ENCODE measurements at regions of chr10 and their contacts with region 1.

Region 1: DNA sequence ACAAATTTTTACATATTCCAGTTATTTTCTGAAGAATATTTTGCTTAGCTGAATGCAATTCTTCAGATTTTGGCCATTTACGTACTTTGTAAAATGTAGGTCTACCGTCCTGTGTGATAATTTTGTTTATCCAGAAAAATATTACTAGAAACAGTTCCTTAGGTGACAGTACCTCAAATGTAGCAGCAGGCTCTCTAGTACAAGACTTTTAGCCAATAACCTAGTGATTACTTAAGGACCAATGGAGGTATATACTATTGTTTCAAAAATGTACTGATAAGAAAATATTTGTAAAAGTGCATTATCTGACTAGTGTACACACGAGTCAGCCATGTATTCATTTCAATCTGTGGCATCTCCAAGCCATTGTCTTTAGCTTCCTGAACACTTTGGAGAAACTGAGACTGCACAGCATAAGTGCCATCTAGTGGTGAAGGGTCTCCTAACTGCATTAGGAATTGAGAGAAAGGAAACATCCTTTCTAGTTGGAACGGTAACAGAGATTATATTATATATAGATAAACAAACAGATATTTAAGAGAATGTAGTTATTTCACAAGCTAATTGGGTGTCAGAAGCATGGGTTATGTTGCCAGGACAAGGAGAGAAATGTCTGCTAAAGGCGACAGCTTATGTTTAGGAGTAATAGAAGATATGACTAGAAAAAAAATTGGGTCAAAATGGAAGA is 23.7 kb downstream of the RTKN2 start:
- DNase-seq: peak in 4 of 5 donors; percentile 7 to 62 (median 50)
- H3K4me3 ChIP-seq: no peak overlapping the region
- H3K4me3 Mint-ChIP-seq: peak overlapping the region in 1 of 7 donors; percentile 10
- H3K27ac ChIP-seq: no peak overlapping the region
- H3K27ac Mint-ChIP-seq: peak overlapping the region in 2 of 8 donors; percentile 3 to 51
- H3K4me1 ChIP-seq: peaks cover 16% of the 10 kb centered on the region
- H3K4me1 Mint-ChIP-seq: peaks cover 23 to 35% (median 31%) of the 10 kb centered on the region in 3 donors
- H3K27me3 ChIP-seq: no peaks in the 10 kb centered on the region
- H3K27me3 Mint-ChIP-seq: peaks cover 0 to 3% of the 10 kb centered on the region in 2 donors

Region 2: DNA sequence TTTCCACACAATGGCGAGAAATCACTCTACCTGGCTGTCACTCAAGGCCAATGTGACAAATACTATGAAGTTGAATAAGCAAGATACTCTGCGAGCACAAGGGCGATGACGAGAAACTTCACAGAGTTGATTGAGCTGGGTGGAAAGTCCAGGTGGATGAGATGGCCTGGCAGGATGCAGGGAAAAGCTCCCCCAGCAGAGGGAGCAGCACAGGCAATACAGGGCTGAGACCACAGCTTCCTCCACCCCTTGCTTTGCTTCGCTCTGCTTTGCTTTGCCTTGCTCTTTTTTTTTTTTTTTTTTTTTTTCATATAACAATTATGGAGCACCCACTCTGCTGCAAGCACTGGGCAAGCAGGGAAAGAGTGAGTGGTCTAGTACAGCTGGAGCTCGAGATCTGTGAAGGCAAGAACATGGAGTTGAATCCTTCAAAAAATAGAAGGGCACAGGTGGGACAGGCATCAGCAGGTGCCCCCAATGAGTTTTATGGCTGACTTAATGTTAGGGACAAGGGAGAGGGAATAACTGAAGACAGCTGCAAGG is 493.9 kb before region 1 on chr10:
- CTCF ChIA-PET with region 1: interaction called, 23 read pairs
- POLR2A ChIA-PET with region 1: no interaction called
- DNase-seq: peak; percentile 29 to 78 (median 50)
- H3K4me3 ChIP-seq: no peak overlapping the region
- H3K4me3 Mint-ChIP-seq: peak overlapping the region in 3 of 7 donors; percentile 6 to 46 (median 34)
- H3K27ac ChIP-seq: no peak overlapping the region
- H3K27ac Mint-ChIP-seq: peak overlapping the region in 1 of 8 donors; percentile 92
- H3K4me1 ChIP-seq: peaks cover 19% of the 10 kb centered on the region
- H3K4me1 Mint-ChIP-seq: peaks cover 24 to 29% (median 28%) of the 10 kb centered on the region in 3 donors
- H3K27me3 ChIP-seq: no peaks in the 10 kb centered on the region
- H3K27me3 Mint-ChIP-seq: no peaks in the 10 kb centered on the region

Region 3: GRCh38 chr10:61896854-61897661 is 347.9 kb before region 1 on chr10:
- CTCF ChIA-PET with region 1: interaction called, 16 read pairs
- POLR2A ChIA-PET with region 1: interaction called, 7 read pairs
- DNase-seq: peak; percentile 9 to 70 (median 65)
- H3K4me3 ChIP-seq: peak overlapping the region; percentile 26
- H3K4me3 Mint-ChIP-seq: peak overlapping the region; percentile 49 to 85 (median 78)
- H3K27ac ChIP-seq: no peak overlapping the region
- H3K27ac Mint-ChIP-seq: peak overlapping the region; percentile 3 to 98 (median 82)
- H3K4me1 ChIP-seq: peaks cover 31% of the 10 kb centered on the region
- H3K4me1 Mint-ChIP-seq: peaks cover 30 to 37% (median 34%) of the 10 kb centered on the region in 3 donors
- H3K27me3 ChIP-seq: no peaks in the 10 kb centered on the region
- H3K27me3 Mint-ChIP-seq: no peaks in the 10 kb centered on the region

Region 4: DNA sequence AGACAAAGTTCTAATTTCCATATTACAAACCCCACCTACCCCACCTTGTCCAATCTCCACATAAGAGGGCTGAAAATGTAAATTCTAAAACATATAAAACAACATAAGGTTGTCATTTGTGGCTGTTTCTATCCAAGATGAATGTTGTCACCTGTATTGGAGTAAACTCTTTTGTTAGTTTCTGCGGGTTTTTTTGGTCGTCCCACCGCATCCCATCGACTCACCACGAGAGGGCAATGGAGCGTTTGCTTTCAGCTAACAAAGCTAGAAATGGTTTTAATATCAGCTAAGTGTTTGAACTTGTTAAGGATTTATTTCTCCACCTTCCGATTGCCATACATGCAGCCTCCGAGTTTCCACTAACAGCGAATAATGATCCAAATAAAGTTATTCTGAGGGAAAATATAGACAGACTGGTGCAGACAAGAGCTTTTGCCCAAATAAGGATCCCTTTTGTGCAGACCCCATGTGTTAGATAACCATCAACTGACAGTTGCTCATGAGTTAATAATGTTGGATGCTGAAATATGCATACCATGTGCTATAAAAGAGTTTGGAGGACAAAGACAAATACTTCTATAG is 206.2 kb before region 1 on chr10:
- CTCF ChIA-PET with region 1: interaction called, 69 read pairs
- POLR2A ChIA-PET with region 1: interaction called, 5 read pairs
- DNase-seq: peak; percentile 50 to 81 (median 61)
- H3K4me3 ChIP-seq: peak overlapping the region; percentile 10
- H3K4me3 Mint-ChIP-seq: peak overlapping the region in 6 of 7 donors; percentile 9 to 67 (median 42)
- H3K27ac ChIP-seq: no peak overlapping the region
- H3K27ac Mint-ChIP-seq: peak overlapping the region in 6 of 8 donors; percentile 1 to 78 (median 42)
- H3K4me1 ChIP-seq: peaks cover 49% of the 10 kb centered on the region
- H3K4me1 Mint-ChIP-seq: peaks cover 49 to 80% (median 70%) of the 10 kb centered on the region in 3 donors
- H3K27me3 ChIP-seq: no peaks in the 10 kb centered on the region
- H3K27me3 Mint-ChIP-seq: no peaks in the 10 kb centered on the region

Region 5: GRCh38 chr10:62050893-62051433 is 194.0 kb before region 1 on chr10:
- CTCF ChIA-PET with region 1: interaction called, 10 read pairs
- POLR2A ChIA-PET with region 1: no interaction called
- DNase-seq: peak; percentile 23 to 83 (median 52)
- H3K4me3 ChIP-seq: peak overlapping the region; percentile 47
- H3K4me3 Mint-ChIP-seq: peak overlapping the region; percentile 78 to 93 (median 88)
- H3K27ac ChIP-seq: peak overlapping the region; percentile 60
- H3K27ac Mint-ChIP-seq: peak overlapping the region; percentile 79 to 99 (median 94)
- H3K4me1 ChIP-seq: peaks cover 88% of the 10 kb centered on the region
- H3K4me1 Mint-ChIP-seq: peaks cover 96 to 99% (median 98%) of the 10 kb centered on the region in 3 donors
- H3K27me3 ChIP-seq: no peaks in the 10 kb centered on the region
- H3K27me3 Mint-ChIP-seq: no peaks in the 10 kb centered on the region

Region 6: GRCh38 chr10:62166331-62167131 is 78.4 kb before region 1 on chr10:
- CTCF ChIA-PET with region 1: no interaction called
- POLR2A ChIA-PET with region 1: no interaction called
- DNase-seq: no peak
- H3K4me3 ChIP-seq: no peak overlapping the region
- H3K4me3 Mint-ChIP-seq: no peak overlapping the region
- H3K27ac ChIP-seq: no peak overlapping the region
- H3K27ac Mint-ChIP-seq: no peak overlapping the region
- H3K4me1 ChIP-seq: no peaks in the 10 kb centered on the region
- H3K4me1 Mint-ChIP-seq: peaks cover 0 to 4% (median 1%) of the 10 kb centered on the region in 3 donors
- H3K27me3 ChIP-seq: no peaks in the 10 kb centered on the region
- H3K27me3 Mint-ChIP-seq: peaks cover 0 to 1% of the 10 kb centered on the region in 2 donors

Region 7: DNA sequence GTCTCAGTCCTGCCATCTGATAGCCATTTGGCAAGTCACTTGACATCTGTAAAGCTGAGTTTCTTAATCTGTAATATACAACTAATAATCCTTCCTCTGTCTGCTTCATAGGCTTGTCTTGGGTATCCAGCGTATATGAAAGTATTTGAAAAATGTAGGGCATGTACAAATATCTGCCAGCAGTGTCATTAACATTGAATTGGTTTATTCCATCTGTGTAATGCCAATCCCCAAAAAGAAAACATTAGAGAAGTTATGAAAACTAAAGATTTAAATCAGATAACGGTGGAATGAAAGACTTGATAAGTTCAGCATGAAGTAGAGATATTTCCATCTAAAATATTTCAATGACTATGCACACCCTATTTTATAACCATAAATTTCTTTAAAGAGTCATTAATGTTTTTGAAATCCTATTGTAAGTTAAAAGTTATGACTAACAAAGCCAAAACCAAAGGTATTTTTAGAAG is 33.6 kb after region 1 on chr10:
- CTCF ChIA-PET with region 1: no interaction called
- POLR2A ChIA-PET with region 1: no interaction called
- DNase-seq: no peak
- H3K4me3 ChIP-seq: no peak overlapping the region
- H3K4me3 Mint-ChIP-seq: no peak overlapping the region
- H3K27ac ChIP-seq: no peak overlapping the region
- H3K27ac Mint-ChIP-seq: no peak overlapping the region
- H3K4me1 ChIP-seq: no peaks in the 10 kb centered on the region
- H3K4me1 Mint-ChIP-seq: no peaks in the 10 kb centered on the region
- H3K27me3 ChIP-seq: no peaks in the 10 kb centered on the region
- H3K27me3 Mint-ChIP-seq: peaks cover 8 to 14% of the 10 kb centered on the region in 2 donors